ENCODE measurements at regions of chr12 and their contacts with region 1.

Region 1: GRCh38 chr12:109110988-109111495 is 5.3 kb upstream of the ACACB start:
- DNase-seq: peak; percentile 98
- H3K4me3 ChIP-seq: peak overlapping the region; percentile 52 to 60 (median 58)
- H3K27ac ChIP-seq: peak overlapping the region; percentile 91 to 94 (median 92)
- H3K4me1 ChIP-seq: peaks cover 0 to 58% (median 50%) of the 10 kb centered on the region in 4 donors
- H3K27me3 ChIP-seq: no peaks in the 10 kb centered on the region
- CTCF ChIP-seq: no peak
- EP300 ChIP-seq: peak; percentile 92 to 98 (median 96)
- POLR2A ChIP-seq: peak; percentile 78 to 91

Region 2: DNA sequence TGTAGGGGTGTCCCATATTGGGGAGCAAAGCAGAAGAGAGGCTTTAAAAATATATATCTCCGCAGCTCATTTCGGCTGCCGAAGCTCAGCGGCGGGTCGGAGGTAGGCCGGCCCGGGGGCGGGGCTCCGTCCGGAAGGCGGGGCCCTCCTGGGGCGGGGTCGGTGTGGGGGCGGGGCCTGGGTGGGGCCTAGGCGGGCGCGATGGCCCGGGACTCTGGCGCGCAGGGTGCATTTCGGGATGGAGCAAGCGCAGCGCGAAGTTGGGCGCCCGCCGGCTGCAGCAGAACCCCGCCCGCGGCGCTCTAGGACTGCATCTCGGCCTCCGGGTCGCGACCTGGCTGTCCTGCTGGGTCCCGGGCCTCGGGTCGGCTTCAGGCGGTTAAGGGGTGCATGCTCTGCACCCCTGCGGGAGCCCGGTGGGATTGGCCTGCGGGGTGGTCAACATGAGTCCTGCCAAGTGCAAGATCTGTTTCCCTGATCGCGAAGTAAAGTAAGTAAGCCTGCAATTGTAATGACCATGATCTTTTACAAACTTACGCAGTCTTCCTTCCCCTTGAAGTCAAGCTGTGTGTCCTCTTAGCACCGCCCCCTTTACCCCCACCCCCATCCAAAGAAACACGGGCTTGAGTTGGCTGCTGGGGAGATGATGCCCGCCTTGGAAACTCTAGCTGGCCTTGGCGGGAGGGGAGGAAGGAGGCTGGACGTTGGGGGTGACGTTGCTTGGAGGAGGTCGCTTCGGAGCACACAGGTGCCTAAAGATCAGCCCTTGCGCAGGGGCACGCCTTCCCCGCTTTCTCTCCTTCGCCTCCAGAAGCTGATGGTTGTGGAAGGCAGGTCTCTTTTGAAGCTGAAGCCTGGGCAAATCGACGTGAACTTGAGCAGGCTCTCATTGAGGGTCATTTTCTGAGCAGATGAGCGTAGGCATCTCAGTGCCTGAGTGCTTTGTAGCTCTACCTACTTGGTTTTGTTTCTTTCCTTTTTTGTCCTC is 43.7 kb after region 1 on chr12:
- intact Hi-C with region 1: loop called (anchors 2 kb)
- DNase-seq: peak; percentile 96
- H3K4me3 ChIP-seq: peak overlapping the region; percentile 71 to 80 (median 76)
- H3K27ac ChIP-seq: peak overlapping the region; percentile 93 to 98 (median 94)
- H3K4me1 ChIP-seq: peaks cover 0 to 57% (median 49%) of the 10 kb centered on the region in 4 donors
- H3K27me3 ChIP-seq: no peaks in the 10 kb centered on the region
- CTCF ChIP-seq: no peak
- EP300 ChIP-seq: peak in 2 of 4 donors; percentile 18 to 60
- POLR2A ChIP-seq: peak; percentile 27 to 57

Region 3: DNA sequence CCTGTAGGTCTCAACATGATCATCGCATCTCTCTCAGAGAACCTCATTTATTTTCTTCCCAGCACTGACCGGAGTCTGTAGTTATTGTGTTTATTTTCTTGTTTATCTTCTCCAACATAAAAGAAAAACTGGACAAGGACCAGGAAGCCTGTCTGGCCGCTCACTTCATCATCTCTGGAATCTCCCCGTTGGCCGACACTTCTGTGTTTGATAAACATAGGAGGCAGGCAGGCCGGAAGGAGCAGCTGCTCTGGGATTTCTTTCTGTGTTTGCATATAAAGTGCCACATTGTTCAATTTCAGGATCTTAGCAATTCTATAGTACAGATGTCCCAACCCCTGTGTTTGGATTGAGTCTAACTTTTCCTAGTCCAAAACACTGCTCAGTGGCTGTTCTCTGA is 58.6 kb after region 1 on chr12:
- intact Hi-C with region 1: loop called (anchors 1 kb)
- DNase-seq: peak; percentile 62
- H3K4me3 ChIP-seq: no peak overlapping the region
- H3K27ac ChIP-seq: peak overlapping the region; percentile 78 to 89 (median 81)
- H3K4me1 ChIP-seq: peaks cover 0 to 44% (median 37%) of the 10 kb centered on the region in 4 donors
- H3K27me3 ChIP-seq: no peaks in the 10 kb centered on the region
- CTCF ChIP-seq: no peak
- EP300 ChIP-seq: no peak
- POLR2A ChIP-seq: no peak

Region 4: DNA sequence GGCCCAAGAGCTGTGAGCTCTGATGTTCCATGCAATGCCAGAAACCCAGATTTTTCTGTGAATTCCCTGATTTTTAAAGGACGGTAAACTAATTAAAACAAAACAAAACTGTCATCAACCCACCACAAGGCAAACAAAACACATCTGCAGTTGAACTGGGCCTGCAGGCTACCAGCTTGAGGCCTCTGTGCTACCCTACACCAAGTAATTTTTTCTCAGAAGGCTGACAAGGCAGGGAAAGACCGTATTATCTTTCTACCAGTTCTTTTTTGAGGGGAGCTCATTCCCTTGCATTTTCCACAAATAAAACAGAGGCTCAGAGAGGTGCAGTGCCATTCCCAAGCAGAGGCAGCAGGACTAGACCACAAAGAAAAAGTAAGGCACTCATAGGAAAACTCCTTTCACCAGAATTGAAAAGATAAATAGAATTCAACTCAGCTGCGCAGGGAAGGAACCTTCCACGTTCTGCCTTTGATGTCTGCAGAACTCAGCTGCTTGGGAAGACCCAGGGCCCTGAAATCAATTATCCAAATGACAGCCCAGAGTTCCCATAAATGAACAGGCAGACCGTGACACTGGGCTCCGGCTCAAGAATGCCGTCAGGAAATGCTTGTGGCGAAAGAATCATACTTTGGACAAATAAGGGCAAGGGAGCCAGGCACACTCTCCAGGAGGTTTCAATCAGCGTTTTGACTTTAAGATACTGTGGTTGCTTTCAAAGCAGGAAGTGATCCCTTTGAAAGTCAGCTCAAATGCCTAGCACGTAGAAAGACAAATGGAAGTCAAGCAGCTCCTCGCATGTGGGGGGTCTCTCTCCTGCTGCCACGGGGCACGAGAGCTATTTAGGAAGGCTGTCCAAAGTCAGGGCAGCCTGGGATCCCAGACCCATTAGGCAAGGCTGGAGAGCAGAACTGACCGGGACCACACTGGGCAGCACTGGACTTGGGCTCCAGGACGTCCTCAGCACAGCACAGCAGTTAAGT is 352.0 kb after region 1 on chr12:
- intact Hi-C with region 1: loop called (anchors 5 kb)
- DNase-seq: peak; percentile 97
- H3K4me3 ChIP-seq: peak overlapping the region in 3 of 4 donors; percentile 24 to 33 (median 24)
- H3K27ac ChIP-seq: peak overlapping the region; percentile 92 to 98 (median 96)
- H3K4me1 ChIP-seq: peaks cover 0 to 100% (median 99%) of the 10 kb centered on the region in 4 donors
- H3K27me3 ChIP-seq: no peaks in the 10 kb centered on the region
- CTCF ChIP-seq: no peak
- EP300 ChIP-seq: peak; percentile 93 to 98 (median 95)
- POLR2A ChIP-seq: no peak